Right ventricle myocardium superior (tissue), 1 donor: ENCODE measurements at regions of chr1 and their contacts with region 1.

Region 1: GRCh38 chr1:157948312-157949073 is 45.0 kb upstream of the KIRREL1 start:
- DNase-seq: no peak
- ATAC-seq: peak; percentile 94

Region 2: GRCh38 chr1:157580179-157580827 is 368.2 kb before region 1 on chr1:
- intact Hi-C with region 1: loop called (anchors 5 kb)
- DNase-seq: no peak
- ATAC-seq: peak; percentile 51

Region 3: DNA sequence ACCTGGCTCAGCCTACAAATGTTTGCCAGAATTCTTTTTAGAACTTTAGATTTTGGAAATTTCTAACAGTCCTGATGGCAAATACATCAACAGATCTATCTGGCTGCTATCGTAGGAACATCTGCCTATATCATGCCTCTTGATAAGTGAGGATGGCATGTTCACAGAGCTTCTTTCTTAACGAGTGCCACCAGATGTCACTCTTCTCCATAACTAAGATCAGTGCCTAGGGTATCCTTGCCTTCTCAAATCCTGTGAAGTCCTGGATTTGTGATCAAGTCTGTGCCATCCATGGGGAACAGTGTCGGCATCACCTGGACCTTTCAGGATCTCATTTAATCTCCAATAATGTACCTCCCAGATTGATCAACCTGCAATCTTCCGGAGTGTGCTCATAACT is 70.4 kb before region 1 on chr1:
- intact Hi-C with region 1: loop called (anchors 1 kb)
- DNase-seq: no peak
- ATAC-seq: peak; percentile 87

Region 4: GRCh38 chr1:157978586-157979403 is 30.3 kb after region 1 on chr1:
- intact Hi-C with region 1: no loop called
- DNase-seq: no peak
- ATAC-seq: peak; percentile 52